PC-3 (cell line): ENCODE measurements at regions of chr13 and their contacts with region 1.

Region 1: GRCh38 chr13:108096296-108096915 is 118.9 kb downstream of the LIG4 start:
- DNase-seq: peak; percentile 75
- ATAC-seq: peak; percentile 83
- H3K4me3 ChIP-seq: no peak overlapping the region
- H3K27ac ChIP-seq: peak overlapping the region; percentile 27
- H3K4me1 ChIP-seq: peaks cover 17% of the 10 kb centered on the region
- H3K27me3 ChIP-seq: no peaks in the 10 kb centered on the region
- CTCF ChIP-seq: no peak

Region 2: GRCh38 chr13:107205303-107206104 is 890.9 kb before region 1 on chr13:
- CTCF ChIA-PET with region 1: no interaction called
- POLR2A ChIA-PET with region 1: no interaction called
- intact Hi-C with region 1: loop called (anchors 10 kb)
- DNase-seq: peak; percentile 60
- ATAC-seq: peak; percentile 82
- H3K4me3 ChIP-seq: no peak overlapping the region
- H3K27ac ChIP-seq: no peak overlapping the region
- H3K4me1 ChIP-seq: peaks cover 11% of the 10 kb centered on the region; the same call in 1 of the 2 replicates
- H3K27me3 ChIP-seq: no peaks in the 10 kb centered on the region
- CTCF ChIP-seq: peak; percentile 93